K562 (cell line): ENCODE measurements at regions of chr18 and their contacts with region 1.

Region 1: GRCh38 chr18:35407871-35408481 is 30.8 kb upstream of the ZNF396 start:
- DNase-seq: peak; percentile 61 to 85 (median 65)
- ATAC-seq: peak; percentile 90
- H3K4me3 ChIP-seq: no peak overlapping the region
- H3K27ac ChIP-seq: no peak overlapping the region
- H3K4me1 ChIP-seq: peaks cover 8 to 14% of the 10 kb centered on the region in 2 experiments; a peak in 3 of 5 replicates
- H3K27me3 ChIP-seq: peaks cover 0 to 9% of the 10 kb centered on the region in 2 experiments; a peak in 1 of 5 replicates
- CTCF ChIP-seq: peak; percentile 69 to 91 (median 84)
- EP300 ChIP-seq: no peak; the same call in 1 of the 2 replicates
- POLR2A ChIP-seq: no peak
- RAD21 ChIP-seq: peak; percentile 87 to 95

Region 2: DNA sequence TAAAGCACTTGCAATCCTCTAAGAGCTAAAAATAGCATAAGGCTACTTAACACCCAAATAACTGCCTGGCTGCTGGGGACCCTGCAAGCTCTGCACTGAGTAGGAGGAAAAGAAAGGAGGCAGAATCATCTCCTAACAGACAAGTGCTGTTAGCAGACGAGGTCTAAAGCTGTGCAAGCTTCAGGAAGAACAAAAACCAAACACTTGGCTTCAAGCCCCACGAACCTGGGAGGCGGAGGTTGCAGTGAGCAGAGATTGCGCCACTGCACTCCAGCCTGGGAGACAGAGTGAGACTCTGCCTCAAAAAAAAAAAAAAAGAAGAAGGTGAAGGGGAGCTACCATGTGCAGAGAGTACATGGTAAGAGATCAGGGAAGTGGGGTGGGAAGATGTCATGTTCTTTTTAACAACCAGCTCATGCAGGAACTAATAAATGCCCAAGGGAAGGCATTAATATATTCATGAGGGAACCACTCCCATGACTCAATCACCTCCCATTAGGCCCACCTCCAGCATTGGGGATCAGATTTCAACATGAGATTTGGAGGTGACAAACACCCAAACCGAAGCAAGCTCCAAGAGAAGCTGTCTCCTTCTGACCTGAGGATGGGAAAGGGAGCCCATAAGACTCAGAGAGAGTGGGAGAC is 118.6 kb after region 1 on chr18:
- CTCF ChIA-PET with region 1: no interaction called
- POLR2A ChIA-PET with region 1: no interaction called
- in situ Hi-C with region 1: no loop called
- intact Hi-C with region 1: loop called (anchors 5 kb)
- DNase-seq: peak in 1 of 4 experiments; percentile 24
- ATAC-seq: peak; percentile 60
- H3K4me3 ChIP-seq: no peak overlapping the region
- H3K27ac ChIP-seq: no peak overlapping the region
- H3K4me1 ChIP-seq: peaks cover 3 to 6% of the 10 kb centered on the region in 2 experiments; a peak in 3 of 5 replicates
- H3K27me3 ChIP-seq: no peaks in the 10 kb centered on the region; a peak in 1 of 5 replicates
- CTCF ChIP-seq: no peak
- EP300 ChIP-seq: no peak
- POLR2A ChIP-seq: no peak
- RAD21 ChIP-seq: no peak

Region 3: GRCh38 chr18:35580701-35581539 is 172.9 kb after region 1 on chr18:
- CTCF ChIA-PET with region 1: no interaction called
- POLR2A ChIA-PET with region 1: no interaction called
- in situ Hi-C with region 1: no loop called
- intact Hi-C with region 1: loop called (anchors 5 kb)
- DNase-seq: peak; percentile 59 to 76 (median 67)
- ATAC-seq: peak; percentile 89
- H3K4me3 ChIP-seq: peak overlapping the region; percentile 69
- H3K27ac ChIP-seq: peak overlapping the region; percentile 65
- H3K4me1 ChIP-seq: peaks cover 14 to 21% of the 10 kb centered on the region in 2 experiments; a peak in 4 of 5 replicates
- H3K27me3 ChIP-seq: no peaks in the 10 kb centered on the region; a peak in 1 of 5 replicates
- CTCF ChIP-seq: no peak
- EP300 ChIP-seq: no peak
- POLR2A ChIP-seq: no peak
- RAD21 ChIP-seq: no peak

Region 4: GRCh38 chr18:35653392-35654135 is 245.6 kb after region 1 on chr18:
- CTCF ChIA-PET with region 1: no interaction called
- POLR2A ChIA-PET with region 1: no interaction called
- in situ Hi-C with region 1: no loop called
- intact Hi-C with region 1: loop called (anchors 10 kb)
- DNase-seq: no peak
- ATAC-seq: no peak
- H3K4me3 ChIP-seq: no peak overlapping the region
- H3K27ac ChIP-seq: no peak overlapping the region
- H3K4me1 ChIP-seq: no peaks in the 10 kb centered on the region; a peak in 1 of 5 replicates
- H3K27me3 ChIP-seq: no peaks in the 10 kb centered on the region
- CTCF ChIP-seq: no peak
- EP300 ChIP-seq: no peak
- POLR2A ChIP-seq: no peak
- RAD21 ChIP-seq: no peak